K562 (cell line): ENCODE measurements at regions of chr5 and their contacts with region 1.

Region 1: DNA sequence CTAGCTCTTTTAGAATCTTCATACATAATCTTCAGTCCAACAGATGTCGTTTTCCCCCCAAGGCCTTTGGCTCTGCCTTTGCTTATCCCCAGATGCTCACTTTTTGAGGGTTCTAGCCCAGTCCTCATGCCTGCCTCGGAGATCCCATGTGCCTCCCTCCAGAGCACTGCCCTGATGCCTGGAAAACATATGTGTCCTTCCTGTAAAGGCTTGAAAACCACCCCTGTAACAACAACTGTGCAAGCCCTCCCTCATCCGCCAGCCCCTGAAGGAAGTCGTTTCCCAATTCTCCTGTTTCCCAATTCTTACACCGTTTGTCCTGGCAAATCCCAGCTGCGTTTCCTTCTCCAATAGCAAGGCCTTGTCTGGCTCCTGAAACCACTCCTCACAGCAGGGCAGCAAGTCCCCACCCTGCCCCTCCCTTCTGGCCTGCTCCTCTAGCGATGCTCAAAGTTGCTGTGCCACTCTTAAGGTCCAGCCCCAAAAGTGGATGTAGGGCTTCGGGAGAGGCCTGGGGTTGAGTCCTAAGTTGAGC is 52.2 kb downstream of the SLC36A1 start:
- DNase-seq: no peak
- ATAC-seq: no peak
- H3K4me3 ChIP-seq: no peak overlapping the region
- H3K27ac ChIP-seq: no peak overlapping the region
- H3K4me1 ChIP-seq: no peaks in the 10 kb centered on the region; a peak in 1 of 5 replicates
- H3K27me3 ChIP-seq: no peaks in the 10 kb centered on the region
- CTCF ChIP-seq: no peak
- EP300 ChIP-seq: no peak
- POLR2A ChIP-seq: no peak
- RAD21 ChIP-seq: no peak

Region 2: GRCh38 chr5:151288180-151288579 is 211.4 kb before region 1 on chr5:
- CTCF ChIA-PET with region 1: no interaction called
- POLR2A ChIA-PET with region 1: no interaction called
- in situ Hi-C with region 1: no loop called
- intact Hi-C with region 1: loop called (anchors 1 kb)
- DNase-seq: peak in 2 of 4 experiments; percentile 16 to 19
- ATAC-seq: peak; percentile 77
- H3K4me3 ChIP-seq: no peak overlapping the region
- H3K27ac ChIP-seq: no peak overlapping the region
- H3K4me1 ChIP-seq: no peaks in the 10 kb centered on the region
- H3K27me3 ChIP-seq: peaks cover 0 to 10% of the 10 kb centered on the region in 2 experiments; a peak in 4 of 5 replicates
- CTCF ChIP-seq: peak in 2 of 3 experiments; percentile 21 to 24; a peak in 1 of 6 replicates
- EP300 ChIP-seq: no peak
- POLR2A ChIP-seq: no peak
- RAD21 ChIP-seq: peak in 1 of 2 experiments; percentile 28; a peak in 2 of 4 replicates

Region 3: DNA sequence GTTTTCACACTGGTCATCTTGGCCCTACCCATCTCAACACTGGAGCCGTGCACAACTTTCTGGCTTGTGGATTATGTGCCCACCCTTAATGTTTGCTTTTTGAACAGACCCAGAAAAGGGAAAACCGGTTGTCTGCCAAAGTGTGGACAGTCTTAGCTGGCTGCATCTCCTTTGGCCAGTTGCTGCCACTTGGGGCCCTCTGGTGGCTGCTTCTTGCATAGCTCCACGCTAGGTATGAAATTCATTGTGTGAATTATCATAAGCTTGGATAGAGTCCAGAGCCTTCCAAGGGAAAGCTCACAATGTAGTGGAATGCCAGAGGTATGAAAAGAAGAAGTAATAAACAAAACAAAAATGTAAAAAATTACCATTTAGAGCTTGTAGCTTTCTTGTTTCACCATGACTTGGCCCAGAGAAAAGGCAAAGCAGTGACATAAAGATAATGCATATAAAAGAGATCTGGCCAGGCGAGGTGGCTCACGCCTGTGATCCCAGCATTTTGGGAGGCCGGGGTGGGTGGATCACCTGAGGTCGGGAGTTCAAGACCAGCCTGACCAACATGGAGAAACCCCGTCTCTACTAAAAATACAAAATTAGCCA is 183.5 kb before region 1 on chr5:
- CTCF ChIA-PET with region 1: no interaction called
- POLR2A ChIA-PET with region 1: no interaction called
- in situ Hi-C with region 1: no loop called
- intact Hi-C with region 1: loop called (anchors 2 kb)
- DNase-seq: peak; percentile 67 to 71 (median 68)
- ATAC-seq: peak; percentile 98
- H3K4me3 ChIP-seq: no peak overlapping the region
- H3K27ac ChIP-seq: no peak overlapping the region
- H3K4me1 ChIP-seq: no peaks in the 10 kb centered on the region
- H3K27me3 ChIP-seq: peaks cover 0 to 9% of the 10 kb centered on the region in 2 experiments; a peak in 1 of 5 replicates
- CTCF ChIP-seq: peak; percentile 82 to 90 (median 89)
- EP300 ChIP-seq: no peak
- POLR2A ChIP-seq: no peak
- RAD21 ChIP-seq: peak; percentile 70 to 85

Region 4: DNA sequence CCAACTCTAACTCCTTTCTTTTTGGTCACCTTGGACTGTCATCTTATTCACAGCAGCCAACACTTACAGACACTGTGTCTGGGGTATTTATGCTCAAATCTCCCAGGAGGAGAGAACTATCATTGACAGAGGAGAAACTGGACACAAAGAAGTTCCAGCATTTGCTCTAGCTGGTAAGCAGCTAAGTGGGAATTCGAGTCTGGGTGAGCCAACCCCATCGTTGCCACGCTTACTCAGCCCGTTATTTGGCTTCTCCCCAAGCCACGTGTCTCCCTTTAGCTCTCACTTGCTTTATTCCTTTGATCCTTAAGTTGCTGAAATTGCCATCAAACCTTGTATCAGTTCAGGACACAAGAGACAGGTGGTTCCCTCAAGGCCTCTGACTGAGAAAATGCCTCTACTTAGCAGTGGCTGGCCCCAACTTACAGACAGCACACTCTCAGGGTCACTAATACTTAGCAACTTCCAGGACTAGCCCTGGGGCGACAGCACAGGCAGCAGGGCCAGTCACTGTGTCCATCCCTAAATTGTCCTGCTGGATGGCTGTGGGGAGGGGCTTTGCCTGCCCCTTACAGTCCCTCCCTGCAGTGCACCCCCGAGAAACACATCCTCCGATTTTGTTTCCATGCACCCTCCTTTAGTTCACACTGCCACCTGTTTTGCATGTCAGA is 153.6 kb before region 1 on chr5:
- CTCF ChIA-PET with region 1: no interaction called
- POLR2A ChIA-PET with region 1: no interaction called
- in situ Hi-C with region 1: no loop called
- intact Hi-C with region 1: no loop called
- DNase-seq: no peak
- ATAC-seq: no peak; the same call in 2 of the 3 replicates
- H3K4me3 ChIP-seq: no peak overlapping the region
- H3K27ac ChIP-seq: no peak overlapping the region
- H3K4me1 ChIP-seq: no peaks in the 10 kb centered on the region
- H3K27me3 ChIP-seq: peaks cover 4 to 38% of the 10 kb centered on the region in 2 experiments
- CTCF ChIP-seq: no peak
- EP300 ChIP-seq: no peak
- POLR2A ChIP-seq: no peak
- RAD21 ChIP-seq: no peak

Region 5: GRCh38 chr5:151384106-151384505 is 115.5 kb before region 1 on chr5:
- CTCF ChIA-PET with region 1: interaction called, 9 read pairs
- POLR2A ChIA-PET with region 1: no interaction called
- in situ Hi-C with region 1: no loop called
- intact Hi-C with region 1: loop called (anchors 2 kb)
- DNase-seq: no peak
- ATAC-seq: no peak
- H3K4me3 ChIP-seq: no peak overlapping the region
- H3K27ac ChIP-seq: no peak overlapping the region
- H3K4me1 ChIP-seq: no peaks in the 10 kb centered on the region
- H3K27me3 ChIP-seq: peaks cover 20 to 27% of the 10 kb centered on the region in 2 experiments
- CTCF ChIP-seq: no peak
- EP300 ChIP-seq: no peak
- POLR2A ChIP-seq: no peak
- RAD21 ChIP-seq: no peak

Region 6: GRCh38 chr5:151651997-151652645 is 152.6 kb after region 1 on chr5:
- CTCF ChIA-PET with region 1: no interaction called
- POLR2A ChIA-PET with region 1: no interaction called
- in situ Hi-C with region 1: no loop called
- intact Hi-C with region 1: loop called (anchors 5 kb)
- DNase-seq: peak; percentile 61 to 82 (median 75)
- ATAC-seq: peak; percentile 100
- H3K4me3 ChIP-seq: no peak overlapping the region
- H3K27ac ChIP-seq: no peak overlapping the region
- H3K4me1 ChIP-seq: no peaks in the 10 kb centered on the region
- H3K27me3 ChIP-seq: peaks cover 3 to 15% of the 10 kb centered on the region in 2 experiments; a peak in 4 of 5 replicates
- CTCF ChIP-seq: peak; percentile 83 to 93 (median 93)
- EP300 ChIP-seq: no peak
- POLR2A ChIP-seq: no peak
- RAD21 ChIP-seq: peak; percentile 80 to 90

Region 7: GRCh38 chr5:152405145-152405544 is 905.6 kb after region 1 on chr5 and contains the start of gene NMUR2:
- CTCF ChIA-PET with region 1: no interaction called
- POLR2A ChIA-PET with region 1: no interaction called
- in situ Hi-C with region 1: no loop called
- intact Hi-C with region 1: no loop called
- DNase-seq: no peak
- ATAC-seq: no peak
- H3K4me3 ChIP-seq: no peak within 1 kb of the TSS
- H3K27ac ChIP-seq: no peak within 1 kb of the TSS
- H3K4me1 ChIP-seq: no peaks in the 10 kb centered on the region
- H3K27me3 ChIP-seq: no peaks in the 10 kb centered on the region
- CTCF ChIP-seq: no peak
- EP300 ChIP-seq: no peak
- POLR2A ChIP-seq: no peak
- RAD21 ChIP-seq: no peak
- polyA plus RNA-seq, gene NMUR2: not detected